Dendritic cell treated with granulocyte-macrophage colony-stimulating factor and Interleukin-4, amounts not matched to agents 40 ng/mL and 50 ng/mL, for 4 days (primary cell): ENCODE measurements at regions of chr5 and their contacts with region 1.

Region 1: DNA sequence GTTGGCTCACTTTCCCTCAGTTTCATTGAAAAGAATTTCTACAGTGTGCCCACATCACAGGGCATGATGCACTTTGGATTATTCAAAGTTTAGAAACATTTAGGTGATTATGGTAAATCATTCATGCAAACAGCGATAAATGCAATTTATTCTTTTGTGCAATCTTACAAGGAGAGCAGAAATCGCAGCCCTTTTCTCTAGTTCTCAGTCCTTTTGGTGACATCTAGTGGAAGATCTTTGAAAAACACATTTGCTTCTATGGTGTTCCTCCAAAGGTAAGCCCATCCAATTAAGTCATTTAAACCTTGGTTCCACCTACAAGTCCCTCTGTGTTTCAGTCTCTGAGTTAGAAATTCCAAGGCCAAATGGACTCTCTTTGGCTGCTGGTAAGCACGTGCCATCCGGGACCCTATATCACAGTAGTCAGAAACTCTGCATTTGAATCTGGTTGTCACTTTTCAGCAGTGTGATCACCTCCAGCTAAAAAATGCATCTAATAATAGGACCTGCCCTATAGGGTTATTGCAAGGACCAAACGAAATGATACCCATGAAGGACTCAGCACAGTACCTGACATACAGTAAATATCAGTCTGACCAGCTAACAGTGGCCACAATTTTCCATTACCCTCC is 66.4 kb downstream of the MACROH2A1 start:
- H3K4me3 Mint-ChIP-seq: no peak overlapping the region
- H3K27ac Mint-ChIP-seq: no peak overlapping the region
- H3K4me1 Mint-ChIP-seq: peaks cover 18% of the 10 kb centered on the region
- H3K27me3 Mint-ChIP-seq: no peaks in the 10 kb centered on the region

Region 2: DNA sequence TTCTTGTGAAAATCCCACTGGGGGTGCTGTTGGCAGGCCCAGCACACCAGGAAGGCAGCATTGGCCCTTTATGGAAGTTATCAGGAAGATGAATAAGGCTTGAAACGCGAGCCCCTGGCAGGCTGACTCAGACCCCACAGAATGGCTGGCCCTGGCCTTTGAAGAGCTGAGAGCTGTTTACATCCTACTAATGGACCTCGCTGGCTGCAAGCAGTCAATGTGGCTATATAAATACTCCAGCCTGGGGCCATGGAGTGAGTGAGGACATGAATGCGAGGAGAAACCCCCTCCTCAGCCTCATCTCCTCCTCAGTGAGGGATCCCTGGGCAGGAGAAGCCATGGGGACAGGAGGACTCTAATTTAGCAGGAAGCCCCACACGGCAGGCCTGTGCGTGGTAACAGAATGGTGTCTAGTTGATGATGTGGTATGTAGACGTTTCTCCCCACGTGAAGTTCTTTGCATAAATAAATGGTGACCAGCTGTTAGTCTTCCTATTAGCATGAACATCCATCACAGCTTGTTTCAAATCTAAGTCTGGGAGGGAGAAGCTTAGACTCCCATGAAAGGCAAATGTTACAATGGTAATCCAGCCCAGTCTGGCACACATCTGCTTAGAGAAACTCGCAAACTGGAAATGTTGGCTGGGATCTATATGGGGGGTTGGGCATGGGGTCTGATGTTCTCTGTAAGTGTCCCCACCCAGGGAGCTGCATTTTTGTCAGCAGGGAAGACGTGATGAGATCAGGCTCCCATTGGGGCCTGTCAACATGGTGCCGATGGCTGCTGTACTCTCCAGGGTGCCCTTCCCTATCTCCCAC is 123.5 kb before region 1 on chr5:
- intact Hi-C with region 1: loop called (anchors 10 kb)
- H3K4me3 Mint-ChIP-seq: no peak overlapping the region
- H3K27ac Mint-ChIP-seq: peak overlapping the region; percentile 65
- H3K4me1 Mint-ChIP-seq: peaks cover 48% of the 10 kb centered on the region
- H3K27me3 Mint-ChIP-seq: peaks cover 3% of the 10 kb centered on the region